Heart right ventricle (tissue), 16 donors: ENCODE measurements at regions of chr12 and their contacts with region 1.

Region 1: DNA sequence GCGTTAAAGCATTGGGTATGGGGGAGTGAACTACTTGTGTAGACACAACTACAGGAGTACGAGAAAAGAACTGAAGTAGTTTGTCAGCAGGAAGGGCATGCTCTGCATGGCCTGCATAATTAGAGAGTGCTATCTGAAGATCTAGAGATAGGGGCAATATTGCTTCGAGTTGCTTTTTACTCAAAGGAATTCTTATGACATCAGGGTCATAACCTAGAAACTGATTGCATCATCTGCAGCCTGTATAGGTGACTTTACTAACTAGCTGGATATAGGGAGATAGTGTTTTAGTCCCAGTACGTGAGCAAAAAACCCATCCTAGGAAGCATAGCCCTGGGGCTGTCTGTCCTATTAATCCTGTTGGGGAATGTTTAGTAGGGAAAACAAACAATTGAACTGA is 39.8 kb downstream of the TMTC3 start:
- DNase-seq: no peak
- ATAC-seq: no peak
- H3K4me3 ChIP-seq: no peak overlapping the region
- H3K27ac ChIP-seq: no peak overlapping the region
- H3K4me1 ChIP-seq: no peaks in the 10 kb centered on the region
- H3K27me3 ChIP-seq: no peaks in the 10 kb centered on the region
- CTCF ChIP-seq: no peak

Region 2: GRCh38 chr12:88015825-88016224 is 166.1 kb before region 1 on chr12:
- intact Hi-C with region 1: loop called in 1 of 10 experiments (anchors 5 kb)
- DNase-seq: no peak
- ATAC-seq: no peak
- H3K4me3 ChIP-seq: no peak overlapping the region
- H3K27ac ChIP-seq: no peak overlapping the region
- H3K4me1 ChIP-seq: no peaks in the 10 kb centered on the region
- H3K27me3 ChIP-seq: peaks cover 0 to 8% (median 0%) of the 10 kb centered on the region in 7 donors
- CTCF ChIP-seq: no peak

Region 3: DNA sequence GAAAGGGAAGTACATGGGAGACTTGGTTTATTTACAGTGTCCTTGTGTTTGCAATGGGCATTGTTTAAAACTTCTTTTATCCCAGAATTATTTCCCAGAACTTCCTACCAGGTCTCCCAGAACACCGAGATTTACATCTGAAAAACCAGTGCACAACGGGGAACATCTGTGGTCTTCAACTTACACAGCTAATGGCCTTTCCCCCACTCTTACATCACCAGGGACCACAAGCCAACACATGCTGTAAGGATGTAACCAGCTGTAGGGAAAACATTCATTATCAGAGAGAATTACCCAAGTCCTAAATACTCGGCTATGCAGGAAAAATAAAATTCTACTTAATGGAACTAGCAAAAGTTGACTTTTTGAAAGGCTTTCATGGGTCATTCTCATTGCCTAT is 902.9 kb after region 1 on chr12:
- intact Hi-C with region 1: no loop called
- DNase-seq: peak in 1 of 2 donors; percentile 29
- ATAC-seq: peak in 7 of 8 donors; percentile 36 to 79 (median 65)
- H3K4me3 ChIP-seq: no peak overlapping the region
- H3K27ac ChIP-seq: peak overlapping the region in 5 of 10 donors; percentile 32 to 57 (median 54)
- H3K4me1 ChIP-seq: peaks cover 0 to 62% (median 35%) of the 10 kb centered on the region in 9 donors
- H3K27me3 ChIP-seq: no peaks in the 10 kb centered on the region
- CTCF ChIP-seq: no peak